Naive thymus-derived CD4-positive, alpha-beta T cell (primary cell): ENCODE measurements at regions of chr3 and their contacts with region 1.

Region 1: GRCh38 chr3:88003115-88003755 is 55.6 kb downstream of the CGGBP1 start:
- DNase-seq: peak in 5 of 9 donors; percentile 13 to 25 (median 15)
- ATAC-seq: peak; percentile 71
- H3K4me3 ChIP-seq: no peak overlapping the region
- H3K4me3 Mint-ChIP-seq: no peak overlapping the region
- H3K27ac ChIP-seq: no peak overlapping the region
- H3K27ac Mint-ChIP-seq: no peak overlapping the region
- H3K4me1 ChIP-seq: no peaks in the 10 kb centered on the region
- H3K4me1 Mint-ChIP-seq: peaks cover 0 to 17% (median 5%) of the 10 kb centered on the region in 7 donors
- H3K27me3 ChIP-seq: no peaks in the 10 kb centered on the region
- H3K27me3 Mint-ChIP-seq: peaks cover 0 to 17% (median 5%) of the 10 kb centered on the region in 5 donors

Region 2: GRCh38 chr3:87298111-87298718 is 705.0 kb before region 1 on chr3:
- CTCF ChIA-PET with region 1: no interaction called
- POLR2A ChIA-PET with region 1: no interaction called
- intact Hi-C with region 1: loop called (anchors 1 kb)
- DNase-seq: peak in 5 of 9 donors; percentile 24 to 38 (median 28)
- ATAC-seq: peak; percentile 67
- H3K4me3 ChIP-seq: no peak overlapping the region
- H3K4me3 Mint-ChIP-seq: no peak overlapping the region
- H3K27ac ChIP-seq: no peak overlapping the region
- H3K27ac Mint-ChIP-seq: no peak overlapping the region
- H3K4me1 ChIP-seq: no peaks in the 10 kb centered on the region
- H3K4me1 Mint-ChIP-seq: peaks cover 0 to 4% (median 0%) of the 10 kb centered on the region in 7 donors
- H3K27me3 ChIP-seq: no peaks in the 10 kb centered on the region
- H3K27me3 Mint-ChIP-seq: peaks cover 0 to 9% (median 0%) of the 10 kb centered on the region in 5 donors

Region 3: GRCh38 chr3:87553058-87553457 is 450.2 kb before region 1 on chr3:
- CTCF ChIA-PET with region 1: no interaction called
- POLR2A ChIA-PET with region 1: no interaction called
- intact Hi-C with region 1: loop called in 1 of 2 experiments (anchors 10 kb)
- DNase-seq: no peak
- ATAC-seq: no peak
- H3K4me3 ChIP-seq: no peak overlapping the region
- H3K4me3 Mint-ChIP-seq: no peak overlapping the region
- H3K27ac ChIP-seq: no peak overlapping the region
- H3K27ac Mint-ChIP-seq: no peak overlapping the region
- H3K4me1 ChIP-seq: no peaks in the 10 kb centered on the region
- H3K4me1 Mint-ChIP-seq: no peaks in the 10 kb centered on the region
- H3K27me3 ChIP-seq: no peaks in the 10 kb centered on the region
- H3K27me3 Mint-ChIP-seq: peaks cover 0 to 2% (median 0%) of the 10 kb centered on the region in 5 donors

Region 4: GRCh38 chr3:88031642-88032077 is 28.4 kb after region 1 on chr3:
- CTCF ChIA-PET with region 1: no interaction called
- POLR2A ChIA-PET with region 1: no interaction called
- intact Hi-C with region 1: loop called in 1 of 2 experiments (anchors 2 kb)
- DNase-seq: peak in 7 of 9 donors; percentile 29 to 54 (median 38)
- ATAC-seq: peak; percentile 76
- H3K4me3 ChIP-seq: peak overlapping the region; percentile 59
- H3K4me3 Mint-ChIP-seq: peak overlapping the region; percentile 78 to 91 (median 86)
- H3K27ac ChIP-seq: peak overlapping the region; percentile 66
- H3K27ac Mint-ChIP-seq: peak overlapping the region; percentile 82 to 95 (median 88)
- H3K4me1 ChIP-seq: peaks cover 11 to 17% of the 10 kb centered on the region in 2 donors
- H3K4me1 Mint-ChIP-seq: peaks cover 10 to 50% (median 48%) of the 10 kb centered on the region in 7 donors
- H3K27me3 ChIP-seq: no peaks in the 10 kb centered on the region
- H3K27me3 Mint-ChIP-seq: peaks cover 0 to under 1% (median 0%) of the 10 kb centered on the region in 5 donors

Region 5: DNA sequence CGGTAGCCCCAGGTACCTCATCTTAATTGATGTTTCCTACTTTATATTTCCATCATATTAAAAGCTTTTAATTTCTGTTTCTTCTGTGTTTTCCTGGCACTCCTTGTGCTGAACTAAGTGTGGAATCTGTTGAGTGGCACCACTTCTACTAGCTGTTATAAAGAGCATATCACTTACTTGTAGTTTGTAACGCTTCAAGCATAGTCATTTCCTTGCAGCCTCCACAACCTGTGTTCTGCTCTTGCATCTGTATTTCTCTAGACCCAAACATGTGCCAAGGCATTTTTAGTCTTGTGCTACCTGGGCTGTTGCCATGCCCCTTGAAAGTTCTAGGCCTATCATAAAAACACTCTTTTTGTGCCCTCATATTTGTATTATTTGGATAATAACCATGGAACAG is 71.8 kb after region 1 on chr3:
- CTCF ChIA-PET with region 1: no interaction called
- POLR2A ChIA-PET with region 1: no interaction called
- intact Hi-C with region 1: no loop called
- DNase-seq: no peak
- ATAC-seq: no peak
- H3K4me3 ChIP-seq: no peak overlapping the region
- H3K4me3 Mint-ChIP-seq: peak overlapping the region in 3 of 10 donors; percentile 6 to 16 (median 16)
- H3K27ac ChIP-seq: no peak overlapping the region
- H3K27ac Mint-ChIP-seq: peak overlapping the region in 4 of 9 donors; percentile 0 to 27 (median 15)
- H3K4me1 ChIP-seq: peaks cover 0 to 16% of the 10 kb centered on the region in 2 donors
- H3K4me1 Mint-ChIP-seq: peaks cover 30 to 88% (median 75%) of the 10 kb centered on the region in 7 donors
- H3K27me3 ChIP-seq: no peaks in the 10 kb centered on the region
- H3K27me3 Mint-ChIP-seq: no peaks in the 10 kb centered on the region

Region 6: GRCh38 chr3:88113311-88114162 is 110.3 kb after region 1 on chr3:
- CTCF ChIA-PET with region 1: no interaction called
- POLR2A ChIA-PET with region 1: no interaction called
- intact Hi-C with region 1: loop called (anchors 1 kb)
- DNase-seq: peak in 8 of 9 donors; percentile 29 to 73 (median 62)
- ATAC-seq: peak; percentile 95
- H3K4me3 ChIP-seq: no peak overlapping the region
- H3K4me3 Mint-ChIP-seq: no peak overlapping the region
- H3K27ac ChIP-seq: no peak overlapping the region
- H3K27ac Mint-ChIP-seq: peak overlapping the region in 3 of 9 donors; percentile 28 to 68 (median 32)
- H3K4me1 ChIP-seq: no peaks in the 10 kb centered on the region
- H3K4me1 Mint-ChIP-seq: peaks cover 6 to 35% (median 26%) of the 10 kb centered on the region in 7 donors
- H3K27me3 ChIP-seq: no peaks in the 10 kb centered on the region
- H3K27me3 Mint-ChIP-seq: no peaks in the 10 kb centered on the region

Region 7: DNA sequence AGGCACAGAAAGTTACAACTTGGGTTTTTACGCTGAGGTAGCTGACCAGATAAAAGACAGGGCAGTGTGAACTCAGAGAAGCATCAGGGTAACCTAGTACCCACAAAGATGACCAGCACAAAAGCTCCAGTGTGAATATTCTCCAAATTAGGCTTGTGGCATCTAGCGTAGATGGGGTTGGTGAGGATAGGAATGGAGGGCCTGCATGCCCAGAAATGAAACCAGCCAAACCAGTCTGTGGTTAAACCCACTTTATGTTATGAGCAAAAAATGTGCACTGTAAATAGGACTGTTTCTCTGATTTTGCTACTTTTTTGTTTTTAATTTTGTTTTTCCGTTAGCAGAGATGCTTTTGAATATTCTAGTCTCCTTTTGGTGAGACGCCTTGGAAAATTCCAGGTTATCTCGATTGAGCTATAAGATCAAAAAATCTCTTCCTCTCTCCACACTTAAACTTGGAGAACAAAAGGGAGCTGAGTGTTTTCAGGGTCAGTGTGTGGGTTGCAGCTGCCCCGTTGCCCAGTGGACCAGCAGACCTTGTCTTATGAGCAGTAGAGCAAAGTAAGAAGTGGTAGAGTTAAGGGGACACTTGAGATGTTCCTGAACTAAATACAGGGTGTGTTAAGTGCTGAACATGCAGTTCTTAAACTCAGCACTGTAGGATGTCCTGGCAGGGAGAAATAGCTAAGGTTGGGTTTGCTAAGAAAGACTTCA is 279.4 kb after region 1 on chr3:
- CTCF ChIA-PET with region 1: no interaction called
- POLR2A ChIA-PET with region 1: no interaction called
- intact Hi-C with region 1: no loop called
- DNase-seq: no peak
- ATAC-seq: no peak
- H3K4me3 ChIP-seq: no peak overlapping the region
- H3K4me3 Mint-ChIP-seq: no peak overlapping the region
- H3K27ac ChIP-seq: no peak overlapping the region
- H3K27ac Mint-ChIP-seq: no peak overlapping the region
- H3K4me1 ChIP-seq: no peaks in the 10 kb centered on the region
- H3K4me1 Mint-ChIP-seq: peaks cover 0 to 3% (median 0%) of the 10 kb centered on the region in 7 donors
- H3K27me3 ChIP-seq: no peaks in the 10 kb centered on the region
- H3K27me3 Mint-ChIP-seq: peaks cover 0 to 4% (median 1%) of the 10 kb centered on the region in 5 donors